ENCODE measurements at regions of chr12 and their contacts with region 1.

Region 1: GRCh38 chr12:106386813-106387535 is 29.4 kb downstream of the POLR3B start:
- DNase-seq: no peak
- ATAC-seq: no peak
- H3K4me3 ChIP-seq: no peak overlapping the region
- H3K4me3 Mint-ChIP-seq: no peak overlapping the region
- H3K27ac ChIP-seq: no peak overlapping the region
- H3K27ac Mint-ChIP-seq: no peak overlapping the region
- H3K4me1 ChIP-seq: no peaks in the 10 kb centered on the region
- H3K4me1 Mint-ChIP-seq: no peaks in the 10 kb centered on the region
- H3K27me3 ChIP-seq: no peaks in the 10 kb centered on the region
- H3K27me3 Mint-ChIP-seq: no peaks in the 10 kb centered on the region
- CTCF ChIP-seq: no peak

Region 2: DNA sequence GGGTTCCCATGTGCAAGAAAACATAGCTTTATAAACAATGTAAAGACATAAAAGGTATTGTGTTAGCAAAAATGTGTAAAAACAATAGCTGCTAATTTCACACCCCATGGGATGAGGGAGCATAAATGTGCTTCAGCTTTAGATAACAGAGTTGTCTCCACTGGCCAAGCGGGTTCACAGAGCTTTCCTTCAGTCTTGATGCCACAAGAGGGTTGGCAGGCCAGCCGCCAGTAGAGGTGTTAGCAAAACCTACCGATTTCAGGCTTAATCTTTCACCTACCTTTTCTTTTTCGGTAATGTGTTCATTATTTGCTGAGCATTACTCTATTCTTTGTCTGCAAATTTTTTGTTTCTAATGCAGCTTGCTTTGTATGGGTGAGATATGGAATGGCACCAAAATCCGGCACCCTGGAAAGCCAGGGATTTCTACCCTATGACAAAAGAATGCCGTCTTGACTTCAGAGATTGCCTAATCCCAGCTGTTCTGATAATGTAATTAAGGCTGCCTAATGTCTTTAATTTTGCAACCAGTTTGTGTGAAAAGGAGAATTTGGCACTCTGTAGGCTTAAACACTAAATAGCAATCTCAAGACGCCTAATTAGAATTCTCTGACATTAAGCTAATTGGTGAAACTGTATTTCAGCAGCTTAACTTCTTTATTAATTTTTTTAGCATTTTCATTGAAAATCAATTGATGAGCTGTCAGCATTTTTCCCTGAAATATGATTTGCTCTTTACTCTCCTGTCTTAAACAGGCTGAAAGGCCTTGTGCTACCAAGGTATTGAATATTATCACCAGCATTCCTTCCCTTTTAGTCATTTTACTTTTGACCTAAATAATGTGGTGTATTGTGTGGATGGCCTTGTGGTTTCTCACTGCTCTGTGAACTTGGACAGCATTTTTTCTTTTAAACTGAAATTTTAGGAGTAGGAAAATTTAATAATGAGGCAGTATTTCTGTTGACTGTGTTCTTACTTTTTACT is 31.2 kb after region 1 on chr12:
- CTCF ChIA-PET with region 1: no interaction called
- POLR2A ChIA-PET with region 1: no interaction called
- intact Hi-C with region 1: no loop called
- DNase-seq: no peak
- ATAC-seq: no peak
- H3K4me3 ChIP-seq: no peak overlapping the region
- H3K4me3 Mint-ChIP-seq: no peak overlapping the region
- H3K27ac ChIP-seq: no peak overlapping the region
- H3K27ac Mint-ChIP-seq: no peak overlapping the region
- H3K4me1 ChIP-seq: no peaks in the 10 kb centered on the region
- H3K4me1 Mint-ChIP-seq: no peaks in the 10 kb centered on the region
- H3K27me3 ChIP-seq: no peaks in the 10 kb centered on the region
- H3K27me3 Mint-ChIP-seq: no peaks in the 10 kb centered on the region
- CTCF ChIP-seq: no peak

Region 3: GRCh38 chr12:106841510-106842302 is 454.7 kb after region 1 on chr12:
- CTCF ChIA-PET with region 1: interaction called, 20 read pairs
- POLR2A ChIA-PET with region 1: no interaction called
- intact Hi-C with region 1: loop called (anchors 1 kb)
- DNase-seq: peak in 8 of 9 experiments; percentile 3 to 62 (median 39)
- ATAC-seq: peak; percentile 46
- H3K4me3 ChIP-seq: no peak overlapping the region
- H3K4me3 Mint-ChIP-seq: no peak overlapping the region
- H3K27ac ChIP-seq: no peak overlapping the region
- H3K27ac Mint-ChIP-seq: no peak overlapping the region
- H3K4me1 ChIP-seq: peaks cover 5% of the 10 kb centered on the region
- H3K4me1 Mint-ChIP-seq: peaks cover 26% of the 10 kb centered on the region
- H3K27me3 ChIP-seq: no peaks in the 10 kb centered on the region
- H3K27me3 Mint-ChIP-seq: no peaks in the 10 kb centered on the region
- CTCF ChIP-seq: peak; percentile 65

Region 4: DNA sequence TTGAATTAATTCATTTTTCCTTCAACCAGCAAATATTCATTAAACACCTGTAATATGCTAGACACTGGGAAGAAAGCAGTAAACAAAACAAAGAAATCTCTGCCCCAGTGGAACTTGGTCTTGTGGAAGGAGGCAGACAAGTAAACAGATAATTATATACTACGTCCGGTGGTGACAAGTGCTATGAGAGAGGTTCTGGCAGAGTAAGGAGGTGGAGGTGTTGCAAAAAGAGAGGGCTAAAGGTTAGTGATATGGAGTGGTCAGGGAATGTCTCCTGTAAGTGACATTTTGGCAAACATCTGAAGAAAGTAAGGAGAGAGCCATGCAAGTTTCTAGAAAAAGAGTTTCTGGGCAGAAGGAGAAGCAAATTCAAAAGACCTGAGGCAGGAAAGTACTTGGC is 460.9 kb after region 1 on chr12:
- CTCF ChIA-PET with region 1: interaction called, 20 read pairs
- POLR2A ChIA-PET with region 1: no interaction called
- intact Hi-C with region 1: loop called in 1 of 2 experiments (anchors 2 kb)
- DNase-seq: no peak
- ATAC-seq: no peak
- H3K4me3 ChIP-seq: no peak overlapping the region
- H3K4me3 Mint-ChIP-seq: no peak overlapping the region
- H3K27ac ChIP-seq: no peak overlapping the region
- H3K27ac Mint-ChIP-seq: no peak overlapping the region
- H3K4me1 ChIP-seq: no peaks in the 10 kb centered on the region
- H3K4me1 Mint-ChIP-seq: no peaks in the 10 kb centered on the region
- H3K27me3 ChIP-seq: no peaks in the 10 kb centered on the region
- H3K27me3 Mint-ChIP-seq: no peaks in the 10 kb centered on the region
- CTCF ChIP-seq: no peak

Region 5: DNA sequence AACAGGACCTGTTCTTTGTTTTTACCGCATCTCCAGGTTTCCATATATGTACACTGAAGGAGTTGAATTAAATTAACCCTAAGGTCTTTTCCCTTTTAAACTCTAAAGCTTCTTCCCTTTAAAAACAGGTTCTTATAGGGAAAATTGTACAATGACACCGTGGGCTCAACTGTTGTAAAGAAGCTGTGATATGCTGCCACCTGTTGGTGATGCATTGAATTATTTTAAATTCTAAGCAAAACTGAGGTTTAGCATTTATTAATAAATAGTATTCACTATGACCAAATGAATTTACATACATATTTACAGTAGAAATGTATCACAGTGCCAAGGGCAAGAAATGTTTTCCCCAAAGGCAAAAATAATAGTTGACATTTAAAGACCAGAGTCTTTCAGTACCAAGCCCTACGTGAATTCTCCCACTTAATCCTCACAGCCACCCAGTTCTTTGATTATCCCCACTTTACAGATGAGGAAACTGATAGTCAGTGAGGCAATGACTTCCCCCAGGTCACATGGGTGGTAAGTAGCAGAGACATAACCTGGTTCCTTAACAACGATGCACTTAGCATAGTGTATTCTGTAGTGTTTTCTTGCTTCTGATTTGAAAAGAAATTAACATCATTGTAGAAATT is 533.1 kb after region 1 on chr12:
- CTCF ChIA-PET with region 1: interaction called, 10 read pairs
- POLR2A ChIA-PET with region 1: no interaction called
- intact Hi-C with region 1: loop called (anchors 1 kb)
- DNase-seq: peak in 3 of 9 experiments; percentile 32 to 67 (median 58)
- ATAC-seq: no peak
- H3K4me3 ChIP-seq: no peak overlapping the region
- H3K4me3 Mint-ChIP-seq: no peak overlapping the region
- H3K27ac ChIP-seq: no peak overlapping the region
- H3K27ac Mint-ChIP-seq: no peak overlapping the region
- H3K4me1 ChIP-seq: peaks cover 7% of the 10 kb centered on the region
- H3K4me1 Mint-ChIP-seq: peaks cover 9% of the 10 kb centered on the region
- H3K27me3 ChIP-seq: no peaks in the 10 kb centered on the region
- H3K27me3 Mint-ChIP-seq: peaks cover 3% of the 10 kb centered on the region
- CTCF ChIP-seq: peak; percentile 95

Region 6: DNA sequence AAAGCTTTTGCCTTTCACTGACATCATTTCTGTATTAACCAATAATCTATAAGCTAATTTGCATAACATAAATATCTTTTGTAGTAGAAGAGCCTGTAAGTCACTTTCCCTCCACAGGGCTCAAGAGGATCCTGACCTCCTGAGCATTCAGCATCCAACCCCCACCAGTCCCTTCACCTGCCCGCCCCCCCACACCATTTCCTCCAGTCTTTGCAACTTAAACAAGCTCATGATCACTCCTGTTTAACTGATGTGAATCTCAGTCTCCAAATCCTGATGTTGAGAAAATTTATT is 718.4 kb after region 1 on chr12:
- CTCF ChIA-PET with region 1: interaction called, 6 read pairs
- POLR2A ChIA-PET with region 1: no interaction called
- intact Hi-C with region 1: loop called in 1 of 2 experiments (anchors 1 kb)
- DNase-seq: no peak
- ATAC-seq: peak; percentile 38
- H3K4me3 ChIP-seq: no peak overlapping the region
- H3K4me3 Mint-ChIP-seq: no peak overlapping the region
- H3K27ac ChIP-seq: no peak overlapping the region
- H3K27ac Mint-ChIP-seq: no peak overlapping the region
- H3K4me1 ChIP-seq: no peaks in the 10 kb centered on the region
- H3K4me1 Mint-ChIP-seq: peaks cover 3% of the 10 kb centered on the region
- H3K27me3 ChIP-seq: no peaks in the 10 kb centered on the region
- H3K27me3 Mint-ChIP-seq: peaks cover 4% of the 10 kb centered on the region
- CTCF ChIP-seq: no peak

Region 7: GRCh38 chr12:107607464-107608392 is 1220.8 kb after region 1 on chr12:
- CTCF ChIA-PET with region 1: no interaction called
- POLR2A ChIA-PET with region 1: no interaction called
- intact Hi-C with region 1: loop called in 1 of 2 experiments (anchors 5 kb)
- DNase-seq: peak; percentile 57 to 89 (median 83)
- ATAC-seq: peak; percentile 84
- H3K4me3 ChIP-seq: no peak overlapping the region
- H3K4me3 Mint-ChIP-seq: no peak overlapping the region
- H3K27ac ChIP-seq: no peak overlapping the region
- H3K27ac Mint-ChIP-seq: no peak overlapping the region
- H3K4me1 ChIP-seq: no peaks in the 10 kb centered on the region
- H3K4me1 Mint-ChIP-seq: no peaks in the 10 kb centered on the region
- H3K27me3 ChIP-seq: no peaks in the 10 kb centered on the region
- H3K27me3 Mint-ChIP-seq: no peaks in the 10 kb centered on the region
- CTCF ChIP-seq: peak; percentile 94